Astrocyte of the cerebellum (primary cell): ENCODE measurements at regions of chr3 and their contacts with region 1.

Region 1: DNA sequence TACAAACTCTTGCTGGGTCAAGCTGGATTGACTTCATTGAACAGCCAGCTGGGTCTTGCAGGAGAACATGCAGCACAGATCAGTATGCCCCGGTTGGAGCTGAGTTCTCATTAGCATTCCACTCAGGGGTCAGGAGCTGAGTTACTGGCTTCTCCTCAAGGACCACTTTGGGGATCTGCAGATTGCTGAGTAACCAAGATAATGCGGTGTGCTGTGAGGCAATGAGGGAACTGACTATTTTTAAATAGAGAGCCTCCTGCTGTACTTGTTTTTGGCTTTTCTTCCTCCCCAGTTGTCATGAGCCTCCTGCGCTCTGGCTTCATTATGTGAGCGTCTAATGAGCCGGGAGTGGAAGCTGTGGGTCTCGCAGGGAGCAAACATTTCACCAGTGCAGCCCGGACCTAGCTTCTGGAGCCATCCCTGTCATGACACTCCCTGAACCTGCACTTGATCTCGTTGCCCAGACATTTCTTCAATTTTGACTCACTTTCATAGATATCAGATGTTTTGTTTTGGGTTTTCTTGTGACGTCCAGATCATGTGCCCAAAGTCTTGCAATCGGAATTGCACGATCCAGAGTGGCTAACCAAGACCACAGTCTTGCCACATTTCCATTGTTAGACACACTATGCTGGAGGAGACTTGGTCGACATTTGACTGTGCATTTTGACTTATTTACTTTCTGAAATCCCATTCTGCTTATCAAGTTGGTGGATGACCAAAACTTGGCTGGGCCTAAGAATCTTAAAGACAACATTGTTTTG is 327.2 kb downstream of the LRTM1 start:
- DNase-seq: no peak
- H3K4me3 ChIP-seq: no peak overlapping the region
- CTCF ChIP-seq: no peak

Region 2: DNA sequence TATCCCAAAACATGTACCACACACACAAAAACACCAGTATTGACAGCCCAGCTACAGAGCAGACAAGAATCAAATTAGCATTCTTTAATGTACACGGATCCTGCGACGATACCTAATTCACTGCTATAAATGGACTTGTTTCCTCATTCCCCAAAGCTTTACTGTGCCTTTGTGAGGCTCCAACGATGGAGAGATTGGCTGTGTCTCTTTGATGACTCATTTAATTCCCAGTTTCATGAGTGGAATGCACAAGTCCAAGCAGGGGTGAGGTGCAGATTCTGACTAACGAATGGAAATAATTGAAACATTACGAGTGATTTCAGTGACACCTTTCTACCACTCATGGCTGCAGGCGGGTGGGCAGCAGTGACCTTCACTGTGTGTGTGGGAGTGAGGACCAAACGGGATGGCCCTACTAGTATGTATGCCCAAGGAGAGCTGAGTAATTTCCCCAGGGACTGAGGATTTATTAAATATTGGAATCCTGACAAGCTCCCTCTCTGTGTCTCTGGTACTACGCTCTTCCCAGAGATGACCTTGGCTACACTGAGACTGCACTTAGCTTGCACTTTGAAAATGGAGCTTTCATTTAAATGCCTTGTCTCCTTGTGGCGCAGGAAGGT is 321.6 kb before region 1 on chr3:
- in situ Hi-C with region 1: no loop called
- DNase-seq: no peak
- H3K4me3 ChIP-seq: no peak overlapping the region
- CTCF ChIP-seq: no peak

Region 3: DNA sequence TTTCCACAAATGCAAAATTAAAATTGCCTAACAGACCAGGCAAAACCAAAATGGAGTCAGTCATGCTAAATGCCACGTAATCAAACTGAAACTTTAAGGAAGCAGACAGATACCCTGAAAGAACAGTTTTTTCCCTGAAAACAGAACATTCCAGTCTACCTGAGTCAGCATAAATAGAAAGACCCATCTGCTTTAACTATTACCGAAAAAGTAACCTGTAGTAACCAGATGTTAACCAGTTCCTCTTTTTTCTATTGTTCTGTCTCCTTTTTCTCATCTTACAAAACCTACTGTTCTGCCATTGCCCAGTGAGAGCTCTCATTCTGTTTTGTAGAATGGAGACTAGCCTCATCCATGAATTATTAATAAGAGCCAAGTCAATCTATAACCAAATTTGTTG is 192.3 kb before region 1 on chr3:
- in situ Hi-C with region 1: loop called (anchors 10 kb)
- DNase-seq: no peak
- H3K4me3 ChIP-seq: no peak overlapping the region
- CTCF ChIP-seq: no peak